ENCODE measurements at regions of chr7 and their contacts with region 1.

Region 1: GRCh38 chr7:29639881-29640595 is 76.4 kb downstream of the PRR15 start:
- DNase-seq: no peak
- ATAC-seq: no peak
- H3K4me3 ChIP-seq: no peak overlapping the region
- H3K4me3 Mint-ChIP-seq: no peak overlapping the region
- H3K27ac ChIP-seq: no peak overlapping the region
- H3K27ac Mint-ChIP-seq: no peak overlapping the region
- H3K4me1 ChIP-seq: peaks cover 3% of the 10 kb centered on the region
- H3K4me1 Mint-ChIP-seq: no peaks in the 10 kb centered on the region
- H3K27me3 ChIP-seq: no peaks in the 10 kb centered on the region
- H3K27me3 Mint-ChIP-seq: no peaks in the 10 kb centered on the region
- CTCF ChIP-seq: no peak

Region 2: DNA sequence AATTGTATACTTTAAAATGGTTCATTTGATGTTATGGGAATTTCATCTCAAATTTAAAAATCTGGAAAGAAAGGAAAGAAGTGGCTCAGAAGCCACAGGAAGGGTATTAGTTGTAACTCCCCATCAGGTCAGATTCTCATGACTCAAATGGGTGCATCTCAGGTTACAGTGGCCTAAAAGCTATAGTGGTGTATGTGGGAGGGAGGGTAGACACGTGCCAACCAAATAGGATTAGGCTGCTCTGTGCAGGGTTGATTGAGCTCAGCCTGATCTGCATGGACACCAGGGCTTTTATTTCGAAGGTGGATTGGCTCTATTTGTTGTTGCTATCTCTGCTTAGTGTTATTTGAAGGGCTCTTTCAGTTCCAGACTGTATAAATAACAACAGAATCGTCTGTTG is 197.9 kb before region 1 on chr7:
- CTCF ChIA-PET with region 1: no interaction called
- POLR2A ChIA-PET with region 1: no interaction called
- intact Hi-C with region 1: no loop called
- DNase-seq: no peak
- ATAC-seq: no peak
- H3K4me3 ChIP-seq: no peak overlapping the region
- H3K4me3 Mint-ChIP-seq: no peak overlapping the region
- H3K27ac ChIP-seq: no peak overlapping the region
- H3K27ac Mint-ChIP-seq: no peak overlapping the region
- H3K4me1 ChIP-seq: no peaks in the 10 kb centered on the region
- H3K4me1 Mint-ChIP-seq: no peaks in the 10 kb centered on the region
- H3K27me3 ChIP-seq: no peaks in the 10 kb centered on the region
- H3K27me3 Mint-ChIP-seq: no peaks in the 10 kb centered on the region
- CTCF ChIP-seq: no peak

Region 3: GRCh38 chr7:29915481-29916215 is 275.6 kb after region 1 on chr7:
- CTCF ChIA-PET with region 1: no interaction called
- POLR2A ChIA-PET with region 1: no interaction called
- intact Hi-C with region 1: loop called (anchors 5 kb)
- DNase-seq: no peak
- ATAC-seq: no peak
- H3K4me3 ChIP-seq: no peak overlapping the region
- H3K4me3 Mint-ChIP-seq: no peak overlapping the region
- H3K27ac ChIP-seq: no peak overlapping the region
- H3K27ac Mint-ChIP-seq: no peak overlapping the region
- H3K4me1 ChIP-seq: no peaks in the 10 kb centered on the region
- H3K4me1 Mint-ChIP-seq: no peaks in the 10 kb centered on the region
- H3K27me3 ChIP-seq: peaks cover 0 to 5% of the 10 kb centered on the region in 2 experiments
- H3K27me3 Mint-ChIP-seq: peaks cover 4% of the 10 kb centered on the region
- CTCF ChIP-seq: no peak

Region 4: GRCh38 chr7:29921404-29922010 is 281.5 kb after region 1 on chr7:
- CTCF ChIA-PET with region 1: no interaction called
- POLR2A ChIA-PET with region 1: no interaction called
- intact Hi-C with region 1: loop called (anchors 5 kb)
- DNase-seq: peak in 9 of 14 experiments; percentile 7 to 65 (median 25)
- ATAC-seq: peak; percentile 80
- H3K4me3 ChIP-seq: no peak overlapping the region
- H3K4me3 Mint-ChIP-seq: no peak overlapping the region
- H3K27ac ChIP-seq: no peak overlapping the region
- H3K27ac Mint-ChIP-seq: no peak overlapping the region
- H3K4me1 ChIP-seq: no peaks in the 10 kb centered on the region
- H3K4me1 Mint-ChIP-seq: no peaks in the 10 kb centered on the region
- H3K27me3 ChIP-seq: no peaks in the 10 kb centered on the region
- H3K27me3 Mint-ChIP-seq: no peaks in the 10 kb centered on the region
- CTCF ChIP-seq: peak; percentile 91